GM13977 (cell line): ENCODE measurements at regions of chr12 and their contacts with region 1.

Region 1: DNA sequence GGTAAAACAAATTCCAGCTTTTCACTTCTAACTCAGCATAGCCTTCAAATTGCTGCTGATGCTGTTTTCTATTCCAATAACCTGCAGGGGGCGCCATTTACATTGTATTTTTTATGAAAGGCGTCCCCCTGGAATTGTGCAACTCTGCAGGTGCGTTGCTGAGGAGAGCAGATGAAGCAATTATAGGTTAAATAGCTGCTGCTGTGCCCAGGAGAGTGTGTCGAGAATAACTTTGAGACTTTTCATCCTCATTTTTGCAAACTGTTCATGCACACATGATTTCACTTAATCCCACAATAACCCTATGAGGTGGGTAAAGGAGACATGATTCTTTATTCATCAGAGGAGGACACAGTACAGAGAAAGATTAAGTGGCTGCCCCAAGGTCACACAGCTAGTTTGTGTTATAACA is 75.7 kb downstream of the MYRFL start:
- DNase-seq: peak; percentile 17
- CTCF ChIP-seq: peak; percentile 77

Region 2: GRCh38 chr12:70581208-70581607 is 680.5 kb after region 1 on chr12:
- in situ Hi-C with region 1: loop called (anchors 10 kb)
- DNase-seq: peak; percentile 11
- CTCF ChIP-seq: no peak